ENCODE measurements at regions of chr1 and their contacts with region 1.

Region 1: GRCh38 chr1:204363335-204364124 is 3.8 kb upstream of the PLEKHA6 start:
- DNase-seq: peak; percentile 86

Region 2: DNA sequence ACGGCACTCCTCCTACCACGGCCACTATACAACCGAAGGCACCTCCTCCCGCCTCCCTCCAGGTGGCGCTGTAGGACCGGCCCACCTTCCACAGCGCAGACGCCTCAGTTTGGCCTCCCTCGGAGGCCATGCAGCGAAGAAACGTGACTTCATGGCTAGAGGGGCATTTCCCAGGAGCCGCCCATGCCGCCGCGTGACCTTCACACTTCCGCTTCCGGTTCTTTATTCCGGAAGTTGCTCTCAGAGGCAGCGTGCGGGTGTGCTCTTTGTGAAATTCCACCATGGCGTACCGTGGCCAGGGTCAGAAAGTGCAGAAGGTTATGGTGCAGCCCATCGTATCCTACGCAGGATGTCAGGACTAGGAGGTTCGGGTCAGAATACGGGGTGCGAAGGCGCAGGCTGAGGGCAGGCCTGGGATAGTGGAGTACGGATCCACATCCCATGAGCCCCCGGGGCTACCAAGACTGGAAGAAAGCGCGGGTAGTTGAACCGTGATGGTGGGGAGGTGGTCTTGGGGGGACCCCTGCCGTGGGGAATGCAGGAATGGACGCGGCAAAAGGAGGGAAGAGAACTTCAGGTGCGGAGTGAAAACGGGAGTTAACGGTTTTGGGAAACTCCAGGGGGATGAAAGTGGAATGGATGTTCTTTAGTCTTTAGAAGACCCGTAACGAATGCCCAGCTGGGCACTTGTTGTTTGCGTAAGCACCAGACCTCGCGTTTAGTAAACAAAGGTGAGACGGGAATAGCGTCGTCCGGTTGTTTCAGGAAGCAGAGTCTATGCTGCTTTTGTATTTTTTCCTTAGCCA is 501.9 kb before region 1 on chr1 and contains the start of gene SNRPE:
- intact Hi-C with region 1: loop called (anchors 5 kb)
- DNase-seq: peak; percentile 98
- total RNA-seq, gene SNRPE: 47.8 TPM

Region 3: DNA sequence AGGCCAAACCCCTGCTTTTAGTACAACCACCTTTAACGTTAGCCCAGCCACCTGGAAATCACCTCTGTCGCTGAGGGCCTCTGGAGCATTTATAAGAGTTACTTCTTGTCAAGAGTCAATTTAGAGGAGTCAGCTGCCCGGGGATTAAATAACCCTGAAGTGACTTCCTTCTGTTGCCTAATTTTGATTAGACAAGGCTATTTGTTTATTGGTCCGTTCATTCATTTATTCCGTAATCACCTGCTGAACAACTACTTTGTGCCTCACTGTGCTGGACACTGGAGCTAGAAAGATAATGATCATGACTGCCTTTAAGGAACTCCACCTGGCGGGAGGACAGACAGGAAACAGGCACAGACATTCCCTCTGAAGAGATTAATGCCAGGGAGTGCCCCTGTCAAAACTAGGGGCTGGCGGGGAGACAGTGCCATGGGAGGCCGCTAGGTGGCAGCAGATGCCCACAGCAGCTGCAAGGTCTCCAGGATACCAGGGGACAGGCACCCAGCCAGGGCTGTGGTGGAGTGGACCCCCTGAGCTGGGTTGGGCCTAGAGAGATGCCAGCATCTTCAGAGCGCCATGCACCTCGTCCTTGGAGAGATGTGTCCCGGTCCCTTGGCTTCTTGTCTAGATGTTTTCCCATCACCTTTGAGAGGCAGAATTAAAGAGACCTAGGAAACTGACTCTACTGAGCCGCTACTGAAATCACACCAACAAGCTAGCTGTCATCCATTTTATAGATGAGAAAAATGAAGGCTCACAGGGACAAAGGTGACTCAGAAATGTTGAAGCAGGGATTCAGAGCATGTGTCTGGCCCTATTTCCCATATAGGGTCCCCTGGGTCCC is 201.1 kb before region 1 on chr1:
- intact Hi-C with region 1: loop called (anchors 1 kb)
- DNase-seq: peak; percentile 85

Region 4: DNA sequence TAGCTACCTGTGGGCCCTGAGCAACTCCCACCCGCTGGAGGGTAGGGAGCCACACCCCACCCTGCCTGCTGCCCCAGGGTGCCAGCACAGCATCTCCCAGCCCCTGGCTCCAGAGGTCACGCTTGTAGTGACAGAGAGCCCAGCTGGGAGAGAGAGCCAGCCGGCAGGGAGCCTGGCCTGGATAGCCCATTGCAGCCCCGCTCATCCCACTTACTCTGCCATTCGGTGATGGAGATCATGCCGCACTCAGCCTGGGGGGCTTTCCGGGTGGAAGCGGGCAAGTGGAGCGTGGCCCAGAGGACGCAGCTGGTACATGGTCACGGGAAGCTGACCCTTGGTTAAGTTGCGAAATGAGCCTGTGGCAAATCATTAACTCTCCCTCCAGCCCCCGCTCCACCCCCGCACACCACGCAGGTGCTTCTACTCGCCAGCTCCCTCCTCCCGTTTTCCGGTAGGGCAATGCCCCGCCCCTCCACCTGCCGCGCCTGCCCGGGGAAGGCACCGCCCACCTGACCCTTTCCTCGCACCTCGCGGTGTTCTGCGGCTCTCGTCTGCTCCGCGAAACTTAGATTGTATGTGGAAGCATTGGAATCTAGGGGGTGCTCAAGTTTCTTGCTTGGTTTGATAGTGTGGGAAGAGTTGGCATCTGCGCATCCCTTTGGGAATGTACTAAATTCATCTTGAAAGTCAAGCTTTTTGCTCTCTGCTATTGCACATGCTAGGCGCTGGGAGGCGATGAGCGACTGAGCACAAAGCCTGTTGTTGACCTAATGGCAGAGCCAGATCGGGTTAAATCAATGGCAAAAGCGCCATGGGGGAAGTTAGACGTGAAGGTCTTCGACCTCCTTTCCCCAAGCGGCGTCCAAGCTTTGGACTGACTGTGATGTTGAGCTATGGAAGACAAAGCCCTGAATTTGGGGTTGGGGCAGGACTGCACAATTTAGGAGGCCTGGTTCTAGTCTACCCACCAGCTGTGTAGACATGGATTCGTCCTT is 149.6 kb before region 1 on chr1 and contains the start of gene GOLT1A:
- intact Hi-C with region 1: loop called (anchors 2 kb)
- DNase-seq: no peak
- total RNA-seq, gene GOLT1A: not detected

Region 5: DNA sequence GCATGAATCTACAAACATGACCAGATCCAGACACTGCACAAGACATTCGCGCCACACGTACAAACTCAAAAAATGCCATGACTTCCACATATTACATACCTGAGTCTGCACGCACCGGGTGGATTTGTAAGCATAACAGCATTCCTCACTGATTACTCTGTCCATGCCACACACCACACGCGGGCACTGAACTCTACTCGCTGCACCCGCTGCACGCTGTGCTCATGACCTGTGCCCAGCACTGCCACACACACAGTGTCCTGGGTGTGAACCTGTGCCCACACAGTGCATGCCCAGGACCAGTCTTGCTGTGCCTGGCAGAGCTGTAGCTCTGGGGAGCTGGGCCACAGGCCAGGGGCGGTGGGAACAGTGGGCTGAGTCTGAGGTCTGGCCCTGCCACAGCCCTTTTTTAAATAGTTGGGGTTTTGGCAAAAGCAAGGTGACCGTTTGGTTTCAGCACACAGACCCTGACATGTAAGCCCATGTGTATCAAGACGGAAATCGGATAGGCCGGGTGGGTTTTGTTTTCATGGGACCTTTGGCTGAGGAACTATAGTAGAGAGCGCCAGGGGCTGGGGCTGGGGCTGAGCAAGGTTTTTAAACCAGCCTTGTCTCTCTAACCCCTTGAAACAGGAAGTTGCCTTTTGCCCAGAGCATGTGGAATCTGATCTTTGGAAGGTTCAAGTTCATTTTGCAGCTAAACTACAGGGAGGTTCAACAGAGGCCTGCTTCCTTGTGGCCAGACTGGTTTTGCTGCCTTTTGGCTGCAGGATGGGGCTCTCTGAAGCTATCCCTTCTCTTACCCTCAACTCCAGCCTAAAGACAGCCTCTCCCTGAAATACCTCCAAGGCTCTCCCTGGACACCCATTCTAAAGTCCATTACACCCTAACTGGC is 137.4 kb before region 1 on chr1:
- intact Hi-C with region 1: no loop called
- DNase-seq: peak; percentile 70

Region 6: GRCh38 chr1:204257954-204258752 is 105.4 kb before region 1 on chr1:
- intact Hi-C with region 1: loop called (anchors 1 kb)
- DNase-seq: no peak